RWPE1 (cell line): ENCODE measurements at regions of chr4 and their contacts with region 1.

Region 1: DNA sequence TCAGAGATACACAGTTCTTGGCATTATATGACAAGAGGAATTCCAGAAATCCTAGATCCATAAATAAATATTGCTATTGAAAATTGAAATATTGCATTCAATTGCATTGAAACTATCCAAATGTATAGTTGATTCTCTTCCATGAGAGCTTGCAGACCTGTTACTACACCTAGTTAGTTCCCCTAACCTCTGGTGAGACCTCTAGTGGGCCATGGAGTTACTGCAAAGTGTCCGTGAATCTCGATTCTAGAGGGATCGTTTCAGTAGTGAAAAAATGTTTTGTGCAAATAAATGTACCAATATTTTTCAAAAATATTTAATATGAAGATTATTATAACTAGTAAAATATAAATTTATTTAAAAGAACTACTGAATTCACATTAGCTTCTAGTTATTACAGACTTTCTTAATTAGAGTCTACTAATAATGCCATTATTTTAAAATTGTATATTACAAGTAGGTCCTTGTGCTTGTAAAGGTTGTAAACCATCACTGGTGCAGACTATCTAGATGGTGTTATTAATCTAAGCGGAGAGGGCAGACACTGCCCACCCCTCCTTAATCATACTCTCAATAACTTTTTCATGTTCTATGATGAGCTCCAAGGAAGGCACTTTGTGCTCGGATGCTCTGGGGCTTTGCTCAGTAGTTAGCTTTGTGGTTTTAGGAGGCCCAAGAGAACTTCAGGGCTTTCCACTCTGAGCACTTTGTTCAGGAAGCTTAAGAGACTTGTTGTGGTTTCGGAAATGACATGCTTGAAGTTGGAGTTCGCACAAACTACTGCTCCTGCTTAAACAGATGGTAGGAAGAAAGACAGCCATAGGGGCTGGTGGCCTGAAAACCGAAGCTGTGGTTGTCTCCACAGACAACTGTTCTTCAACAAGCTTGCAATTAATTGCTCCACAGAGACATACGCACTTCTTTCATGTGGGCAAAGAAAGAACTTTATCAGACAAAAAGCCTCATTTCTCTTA is 42.8 kb downstream of the IL21 start:
- DNase-seq: peak; percentile 66
- H3K27ac ChIP-seq: no peak overlapping the region
- CTCF ChIP-seq: peak; percentile 81

Region 2: DNA sequence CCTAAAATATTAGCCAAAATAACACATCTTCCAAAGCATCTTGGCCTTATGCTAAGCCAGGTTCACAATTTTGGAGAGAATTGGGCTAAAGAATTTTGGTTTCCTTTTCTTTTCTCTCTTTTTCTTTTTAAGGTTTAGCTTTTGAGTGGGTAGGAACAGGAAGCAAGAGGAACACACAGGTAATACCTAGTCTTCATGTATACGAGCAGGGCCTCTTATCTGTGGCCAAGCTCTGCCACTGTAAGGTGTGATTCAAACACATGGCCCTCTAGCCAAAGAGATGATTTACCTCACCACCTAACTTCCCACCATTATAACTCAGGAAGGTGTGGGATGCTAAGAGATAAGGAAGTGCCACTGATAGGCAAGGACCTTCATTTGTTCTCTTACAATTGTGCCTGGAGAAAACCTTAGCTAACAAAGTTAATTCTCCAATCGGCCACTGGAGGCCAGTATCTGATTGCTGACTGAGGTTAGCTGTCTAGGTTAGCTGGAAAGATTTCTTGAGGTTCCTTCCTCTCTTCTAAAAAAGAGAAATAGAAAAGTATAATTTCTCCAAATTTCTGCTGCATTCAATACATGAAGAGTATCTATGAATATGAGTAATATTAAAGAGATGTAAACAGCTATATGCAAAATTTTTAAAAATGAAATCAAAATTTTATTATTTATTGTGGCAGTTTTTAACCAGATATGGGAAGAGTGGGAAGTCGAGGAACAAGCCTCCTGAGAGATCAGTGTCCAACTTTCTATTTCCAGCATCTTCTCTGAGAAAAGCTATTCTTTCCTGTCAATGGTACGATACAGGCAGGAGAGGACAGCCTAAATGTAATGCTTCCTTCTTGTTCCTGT is 677.7 kb before region 1 on chr4:
- CTCF ChIA-PET with region 1: interaction called, 12 read pairs
- POLR2A ChIA-PET with region 1: no interaction called
- DNase-seq: peak; percentile 55
- H3K27ac ChIP-seq: no peak overlapping the region
- CTCF ChIP-seq: peak; percentile 83

Region 3: GRCh38 chr4:122195718-122196117 is 382.4 kb before region 1 on chr4:
- CTCF ChIA-PET with region 1: no interaction called
- POLR2A ChIA-PET with region 1: no interaction called
- DNase-seq: no peak
- H3K27ac ChIP-seq: no peak overlapping the region
- CTCF ChIP-seq: no peak

Region 4: DNA sequence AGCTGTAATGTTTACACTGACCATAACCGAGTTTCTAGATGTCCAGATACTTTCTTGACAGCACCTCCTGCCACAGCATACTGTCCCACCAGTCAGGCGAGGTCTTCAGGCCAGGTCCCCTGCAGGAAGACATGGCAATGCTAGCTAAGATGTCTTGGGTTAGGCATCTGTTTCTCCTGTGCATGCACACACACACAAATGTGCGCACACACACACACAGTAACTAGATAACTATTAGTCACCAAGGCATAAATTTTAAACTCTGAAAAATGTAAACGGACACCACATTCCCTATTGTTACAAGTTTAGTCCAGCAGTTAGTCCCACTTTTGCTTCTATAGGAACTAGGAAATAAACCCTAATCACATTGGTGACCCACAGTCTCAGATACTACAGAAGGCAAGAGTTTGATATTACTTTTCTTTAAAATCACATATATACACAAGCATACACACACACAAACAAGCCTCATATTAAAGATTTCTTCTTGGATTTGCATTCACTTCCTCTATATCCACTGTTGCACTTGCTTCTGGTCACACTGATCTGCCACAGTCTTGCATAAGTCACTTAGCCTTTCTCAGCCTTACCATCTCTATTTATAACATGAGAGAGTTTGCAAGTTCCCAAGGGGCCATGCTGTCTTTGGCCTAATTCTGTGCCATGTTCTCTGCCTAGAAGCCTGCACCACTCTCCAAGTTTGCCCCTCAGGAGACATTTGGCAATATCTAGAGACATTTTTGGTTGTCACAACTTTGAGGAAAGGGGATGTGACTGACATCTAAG is 10.6 kb after region 1 on chr4:
- CTCF ChIA-PET with region 1: interaction called, 11 read pairs
- POLR2A ChIA-PET with region 1: no interaction called
- DNase-seq: no peak
- H3K27ac ChIP-seq: no peak overlapping the region
- CTCF ChIP-seq: no peak

Region 5: GRCh38 chr4:122890142-122890769 is 312.2 kb after region 1 on chr4:
- CTCF ChIA-PET with region 1: no interaction called
- POLR2A ChIA-PET with region 1: no interaction called
- DNase-seq: peak; percentile 12
- H3K27ac ChIP-seq: no peak overlapping the region
- CTCF ChIP-seq: no peak